ENCODE measurements at regions of chr11 and their contacts with region 1.

Region 1: GRCh38 chr11:112226062-112226830 is at the start of gene PTS:
- DNase-seq: peak; percentile 90
- ATAC-seq: peak; percentile 97
- H3K4me3 Mint-ChIP-seq: peak within 1 kb of the TSS; percentile 78
- H3K27ac Mint-ChIP-seq: peak within 1 kb of the TSS; percentile 94
- H3K4me1 Mint-ChIP-seq: peaks cover 19% of the 10 kb centered on the region
- H3K27me3 Mint-ChIP-seq: no peaks in the 10 kb centered on the region
- total RNA-seq, gene PTS: 17.4 to 23.8 TPM

Region 2: GRCh38 chr11:112024773-112025678 is 201.2 kb before region 1 on chr11 and contains the start of gene DLAT:
- CTCF ChIA-PET with region 1: no interaction called
- POLR2A ChIA-PET with region 1: no interaction called
- intact Hi-C with region 1: loop called in 1 of 2 experiments (anchors 5 kb)
- DNase-seq: peak; percentile 93
- ATAC-seq: peak; percentile 90
- H3K4me3 Mint-ChIP-seq: peak within 1 kb of the TSS; percentile 96
- H3K27ac Mint-ChIP-seq: peak within 1 kb of the TSS; percentile 100
- H3K4me1 Mint-ChIP-seq: peaks cover 19% of the 10 kb centered on the region
- H3K27me3 Mint-ChIP-seq: no peaks in the 10 kb centered on the region
- total RNA-seq, gene DLAT: 47.8 to 49.1 TPM

Region 3: DNA sequence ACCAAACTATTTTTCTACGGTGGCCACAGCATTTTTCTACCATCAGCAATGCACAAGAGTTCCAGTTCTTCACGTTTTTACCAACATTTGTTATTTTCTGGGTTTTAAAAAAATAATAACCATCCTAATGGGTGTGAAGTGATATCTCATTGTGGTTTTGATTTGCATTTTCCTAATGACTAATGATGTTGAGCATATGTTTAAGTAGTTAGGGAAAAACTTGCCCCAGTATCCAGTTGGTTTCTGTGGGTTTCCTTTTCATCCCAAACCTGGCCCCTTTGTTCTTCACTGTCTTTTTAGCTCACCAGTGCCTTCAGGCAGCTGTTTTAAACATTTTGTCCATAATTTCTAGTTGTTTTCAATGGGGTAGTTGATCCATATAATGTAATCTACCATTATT is 14.7 kb before region 1 on chr11:
- CTCF ChIA-PET with region 1: interaction called, 6 read pairs
- POLR2A ChIA-PET with region 1: no interaction called
- intact Hi-C with region 1: loop called in 1 of 2 experiments (anchors 1 kb)
- DNase-seq: peak; percentile 24
- ATAC-seq: no peak
- H3K4me3 Mint-ChIP-seq: no peak overlapping the region
- H3K27ac Mint-ChIP-seq: no peak overlapping the region
- H3K4me1 Mint-ChIP-seq: peaks cover 17% of the 10 kb centered on the region
- H3K27me3 Mint-ChIP-seq: peaks cover 4% of the 10 kb centered on the region

Region 4: GRCh38 chr11:112289588-112290492 is 63.6 kb after region 1 on chr11:
- CTCF ChIA-PET with region 1: interaction called, 191 read pairs
- POLR2A ChIA-PET with region 1: no interaction called
- intact Hi-C with region 1: no loop called
- DNase-seq: peak; percentile 91
- ATAC-seq: peak; percentile 92
- H3K4me3 Mint-ChIP-seq: peak overlapping the region; percentile 69
- H3K27ac Mint-ChIP-seq: peak overlapping the region; percentile 82
- H3K4me1 Mint-ChIP-seq: peaks cover 29% of the 10 kb centered on the region
- H3K27me3 Mint-ChIP-seq: no peaks in the 10 kb centered on the region

Region 5: GRCh38 chr11:113773416-113774173 is 1547.3 kb after region 1 on chr11 and contains the start of gene ZW10:
- CTCF ChIA-PET with region 1: no interaction called
- POLR2A ChIA-PET with region 1: no interaction called
- intact Hi-C with region 1: loop called (anchors 5 to 10 kb)
- DNase-seq: peak; percentile 96
- ATAC-seq: peak; percentile 99
- H3K4me3 Mint-ChIP-seq: peak within 1 kb of the TSS; percentile 98
- H3K27ac Mint-ChIP-seq: peak within 1 kb of the TSS; percentile 96
- H3K4me1 Mint-ChIP-seq: peaks cover 18% of the 10 kb centered on the region
- H3K27me3 Mint-ChIP-seq: no peaks in the 10 kb centered on the region
- total RNA-seq, gene ZW10: 16.9 to 18.5 TPM